ENCODE measurements at regions of chrX and their contacts with region 1.

Region 1: GRCh38 chrX:23589496-23589895 is 77.8 kb upstream of the PRDX4 start:
- DNase-seq: no peak
- H3K4me3 ChIP-seq: no peak overlapping the region
- H3K27ac ChIP-seq: no peak overlapping the region
- H3K4me1 ChIP-seq: no peaks in the 10 kb centered on the region
- H3K27me3 ChIP-seq: peaks cover 0 to 16% of the 10 kb centered on the region in 2 donors
- CTCF ChIP-seq: no peak
- POLR2A ChIP-seq: no peak

Region 2: GRCh38 chrX:22159071-22159799 is 1430.3 kb before region 1 on chrX:
- intact Hi-C with region 1: loop called (anchors 10 kb)
- DNase-seq: no peak
- H3K4me3 ChIP-seq: no peak overlapping the region
- H3K27ac ChIP-seq: no peak overlapping the region
- H3K4me1 ChIP-seq: no peaks in the 10 kb centered on the region
- H3K27me3 ChIP-seq: peaks cover 0 to 15% of the 10 kb centered on the region in 2 donors
- CTCF ChIP-seq: no peak
- POLR2A ChIP-seq: no peak

Region 3: DNA sequence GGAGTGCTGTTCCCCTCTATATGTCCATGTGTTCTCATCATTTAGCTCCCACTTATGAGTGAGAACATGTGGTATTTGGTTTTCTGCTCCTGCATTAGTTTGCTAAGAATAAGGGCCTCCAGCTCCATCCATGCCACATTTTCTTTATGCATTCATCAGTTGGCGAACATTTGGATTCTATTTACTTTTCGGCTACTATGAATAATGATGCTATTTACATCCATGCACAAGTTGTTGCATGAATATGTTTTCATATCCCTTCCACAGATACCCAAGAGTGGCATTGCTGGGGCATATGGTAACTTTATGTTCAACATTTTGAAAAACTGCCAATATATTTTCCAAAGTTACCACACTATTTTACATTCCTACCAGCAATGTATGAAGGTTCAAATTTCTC is 603.5 kb before region 1 on chrX:
- intact Hi-C with region 1: no loop called
- DNase-seq: no peak
- H3K4me3 ChIP-seq: no peak overlapping the region
- H3K27ac ChIP-seq: no peak overlapping the region
- H3K4me1 ChIP-seq: no peaks in the 10 kb centered on the region
- H3K27me3 ChIP-seq: peaks cover 0 to 21% of the 10 kb centered on the region in 2 donors
- CTCF ChIP-seq: no peak
- POLR2A ChIP-seq: no peak

Measured in breast epithelium (tissue), 4 donors.